Naive thymus-derived CD4-positive, alpha-beta T cell (primary cell): ENCODE measurements at regions of chr6 and their contacts with region 1.

Region 1: GRCh38 chr6:33200219-33201146 is at the starts of genes RXRB and SLC39A7:
- DNase-seq: peak; percentile 88 to 99 (median 97)
- ATAC-seq: peak; percentile 85
- H3K4me3 ChIP-seq: peak within 1 kb of the TSS; percentile 89
- H3K4me3 Mint-ChIP-seq: peak within 1 kb of the TSS; percentile 95 to 100 (median 99)
- H3K27ac ChIP-seq: peak within 1 kb of the TSS; percentile 96
- H3K27ac Mint-ChIP-seq: peak within 1 kb of the TSS; percentile 97 to 99 (median 99)
- H3K4me1 ChIP-seq: peaks cover 32 to 37% of the 10 kb centered on the region in 2 donors
- H3K4me1 Mint-ChIP-seq: peaks cover 62 to 84% (median 73%) of the 10 kb centered on the region in 7 donors
- H3K27me3 ChIP-seq: no peaks in the 10 kb centered on the region
- H3K27me3 Mint-ChIP-seq: no peaks in the 10 kb centered on the region
- total RNA-seq, gene RXRB: 50.3 to 103 (median 76.2) TPM
- total RNA-seq, gene SLC39A7: 19.1 to 51.9 (median 27.9) TPM

Region 2: GRCh38 chr6:32195652-32195901 is 1004.9 kb before region 1 on chr6:
- CTCF ChIA-PET with region 1: no interaction called
- POLR2A ChIA-PET with region 1: no interaction called
- intact Hi-C with region 1: loop called in 1 of 2 experiments (anchors 5 kb)
- DNase-seq: peak; percentile 94 to 100 (median 98)
- ATAC-seq: peak; percentile 89
- H3K4me3 ChIP-seq: peak overlapping the region; percentile 98
- H3K4me3 Mint-ChIP-seq: peak overlapping the region; percentile 92 to 99 (median 97)
- H3K27ac ChIP-seq: peak overlapping the region; percentile 97
- H3K27ac Mint-ChIP-seq: peak overlapping the region; percentile 86 to 99 (median 97)
- H3K4me1 ChIP-seq: peaks cover 20 to 29% of the 10 kb centered on the region in 2 donors
- H3K4me1 Mint-ChIP-seq: peaks cover 24 to 40% (median 31%) of the 10 kb centered on the region in 7 donors
- H3K27me3 ChIP-seq: no peaks in the 10 kb centered on the region
- H3K27me3 Mint-ChIP-seq: no peaks in the 10 kb centered on the region

Region 3: DNA sequence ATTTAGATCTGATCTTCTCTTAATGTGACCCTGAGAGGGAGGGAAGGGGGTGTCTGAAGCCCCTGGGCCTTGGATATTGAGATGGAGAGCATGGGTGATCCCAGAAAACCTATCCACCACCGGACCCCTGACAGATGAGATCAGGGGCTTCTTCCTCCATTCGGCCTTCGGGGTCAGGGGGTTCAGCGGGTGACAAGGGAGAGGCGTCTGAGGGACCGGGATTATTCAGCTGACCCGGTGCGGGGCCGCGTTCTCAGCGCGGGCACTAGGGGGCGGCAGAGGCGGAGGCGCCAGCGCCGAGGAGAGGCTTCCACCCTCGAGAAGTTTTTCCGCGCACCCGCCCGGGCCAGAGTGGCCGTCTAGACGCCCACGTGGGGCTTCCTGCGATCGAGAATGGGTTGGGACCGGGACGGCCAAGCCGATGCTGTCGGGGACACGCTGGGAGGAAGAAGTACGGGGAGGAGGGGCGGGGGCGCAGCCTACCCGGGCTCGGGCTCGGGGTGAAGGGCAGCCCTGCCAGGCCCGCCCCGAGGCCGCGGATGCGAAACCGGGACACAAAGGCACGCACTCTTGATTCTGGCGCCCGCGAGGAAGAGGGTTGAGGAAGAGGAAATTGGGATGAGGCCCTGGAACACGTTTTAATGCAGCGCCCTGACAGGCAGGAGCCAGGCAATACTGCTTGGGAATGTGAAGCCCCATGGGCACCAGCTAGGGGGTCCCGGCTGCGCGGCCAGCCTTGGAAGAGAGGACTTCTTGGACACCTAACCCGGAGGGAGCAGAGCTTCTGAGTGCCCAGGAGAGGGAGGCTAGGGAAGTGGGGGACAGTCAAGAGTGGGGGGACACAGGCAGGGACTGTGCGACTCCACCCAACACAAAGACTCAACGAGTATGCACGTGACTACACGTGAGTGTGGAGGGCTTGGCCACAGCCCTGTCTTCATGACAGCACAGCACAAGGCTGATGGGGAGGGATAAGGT is 38.8 kb before region 1 on chr6:
- CTCF ChIA-PET with region 1: interaction called, 31 read pairs
- POLR2A ChIA-PET with region 1: interaction called, 5 read pairs
- intact Hi-C with region 1: loop called (anchors 1 kb)
- DNase-seq: peak; percentile 64 to 89 (median 79)
- ATAC-seq: peak; percentile 97
- H3K4me3 ChIP-seq: peak overlapping the region; percentile 51
- H3K4me3 Mint-ChIP-seq: peak overlapping the region; percentile 76 to 90 (median 85)
- H3K27ac ChIP-seq: no peak overlapping the region
- H3K27ac Mint-ChIP-seq: peak overlapping the region in 6 of 9 donors; percentile 26 to 82 (median 58)
- H3K4me1 ChIP-seq: no peaks in the 10 kb centered on the region
- H3K4me1 Mint-ChIP-seq: peaks cover 8 to 16% (median 10%) of the 10 kb centered on the region in 7 donors
- H3K27me3 ChIP-seq: no peaks in the 10 kb centered on the region
- H3K27me3 Mint-ChIP-seq: peaks cover 0 to 5% (median 0%) of the 10 kb centered on the region in 5 donors

Region 4: GRCh38 chr6:33288921-33289748 is 88.7 kb after region 1 on chr6 and contains the starts of genes PFDN6 and WDR46:
- CTCF ChIA-PET with region 1: no interaction called
- POLR2A ChIA-PET with region 1: no interaction called
- intact Hi-C with region 1: loop called (anchors 1 to 5 kb)
- DNase-seq: peak; percentile 55 to 90 (median 87)
- ATAC-seq: peak; percentile 96
- H3K4me3 ChIP-seq: peak within 1 kb of the TSS; percentile 97
- H3K4me3 Mint-ChIP-seq: peak within 1 kb of the TSS; percentile 89 to 99 (median 98)
- H3K27ac ChIP-seq: peak within 1 kb of the TSS; percentile 80
- H3K27ac Mint-ChIP-seq: peak within 1 kb of the TSS; percentile 89 to 98 (median 92)
- H3K4me1 ChIP-seq: peaks cover 19 to 20% of the 10 kb centered on the region in 2 donors
- H3K4me1 Mint-ChIP-seq: peaks cover 32 to 51% (median 45%) of the 10 kb centered on the region in 7 donors
- H3K27me3 ChIP-seq: no peaks in the 10 kb centered on the region
- H3K27me3 Mint-ChIP-seq: no peaks in the 10 kb centered on the region
- total RNA-seq, gene PFDN6: 14.6 to 73.2 (median 35.5) TPM
- total RNA-seq, gene WDR46: 25.3 to 62.7 (median 52.7) TPM

Region 5: GRCh38 chr6:33391278-33391921 is 190.9 kb after region 1 on chr6 and contains the start of gene KIFC1:
- CTCF ChIA-PET with region 1: no interaction called
- POLR2A ChIA-PET with region 1: no interaction called
- intact Hi-C with region 1: loop called (anchors 1 kb)
- DNase-seq: peak; percentile 94 to 99 (median 99)
- ATAC-seq: peak; percentile 92
- H3K4me3 ChIP-seq: peak within 1 kb of the TSS; percentile 58
- H3K4me3 Mint-ChIP-seq: peak within 1 kb of the TSS; percentile 82 to 93 (median 85)
- H3K27ac ChIP-seq: peak within 1 kb of the TSS; percentile 81
- H3K27ac Mint-ChIP-seq: peak within 1 kb of the TSS; percentile 94 to 98 (median 97)
- H3K4me1 ChIP-seq: peaks cover 13% of the 10 kb centered on the region in 2 donors
- H3K4me1 Mint-ChIP-seq: peaks cover 11 to 47% (median 22%) of the 10 kb centered on the region in 7 donors
- H3K27me3 ChIP-seq: no peaks in the 10 kb centered on the region
- H3K27me3 Mint-ChIP-seq: peaks cover 0 to 5% (median 0%) of the 10 kb centered on the region in 5 donors
- total RNA-seq, gene KIFC1: 0.65 to 87.9 (median 1.6) TPM

Region 6: DNA sequence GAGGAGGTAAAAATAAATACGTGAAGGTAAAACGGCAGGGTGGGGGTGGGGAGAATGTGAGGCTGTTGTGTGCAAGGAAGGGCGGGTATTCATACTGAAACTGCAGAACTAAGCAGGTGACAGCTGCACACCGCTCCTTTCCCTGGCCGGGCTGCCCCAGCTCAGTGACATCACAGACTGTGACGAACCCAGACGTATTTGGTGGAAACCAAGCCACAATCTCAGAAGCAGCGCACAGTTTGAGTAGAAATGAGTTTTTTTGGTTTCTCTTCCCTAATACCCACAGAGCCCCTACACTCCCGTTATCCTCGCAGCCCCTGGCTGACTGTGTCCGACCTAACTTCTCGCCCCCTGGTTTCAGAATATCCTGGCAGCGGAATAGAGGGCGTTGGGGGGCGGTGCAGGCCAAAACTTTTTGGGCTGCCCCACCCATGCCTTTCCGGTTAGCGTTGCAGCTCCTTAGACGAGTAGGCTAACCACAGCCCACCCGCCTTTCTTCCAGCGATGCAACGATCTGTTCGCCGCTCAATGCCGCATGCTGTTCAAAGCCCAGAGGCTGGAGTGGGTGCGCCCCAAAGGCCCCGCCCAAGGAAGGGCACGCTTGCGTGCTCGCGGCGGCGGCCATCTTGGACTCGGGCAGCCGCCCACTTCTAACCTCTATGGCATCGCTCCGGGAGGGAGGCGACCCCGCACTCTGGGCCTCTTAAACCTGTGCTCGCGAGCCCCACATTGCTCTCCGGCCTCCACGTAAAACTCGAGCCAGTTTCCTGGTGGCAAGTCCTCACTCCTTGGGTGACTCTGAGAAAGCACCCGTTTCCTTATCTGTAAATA is 370.5 kb after region 1 on chr6:
- CTCF ChIA-PET with region 1: no interaction called
- POLR2A ChIA-PET with region 1: no interaction called
- intact Hi-C with region 1: loop called in 1 of 2 experiments (anchors 2 kb)
- DNase-seq: peak; percentile 81 to 98 (median 95)
- ATAC-seq: peak; percentile 91
- H3K4me3 ChIP-seq: peak overlapping the region; percentile 85
- H3K4me3 Mint-ChIP-seq: peak overlapping the region; percentile 80 to 99 (median 94)
- H3K27ac ChIP-seq: peak overlapping the region; percentile 98
- H3K27ac Mint-ChIP-seq: peak overlapping the region; percentile 99 to 100 (median 100)
- H3K4me1 ChIP-seq: peaks cover 19 to 21% of the 10 kb centered on the region in 2 donors
- H3K4me1 Mint-ChIP-seq: peaks cover 8 to 57% (median 31%) of the 10 kb centered on the region in 7 donors
- H3K27me3 ChIP-seq: no peaks in the 10 kb centered on the region
- H3K27me3 Mint-ChIP-seq: peaks cover 0 to 3% (median 0%) of the 10 kb centered on the region in 5 donors